Pancreas (tissue), 10 donors: ENCODE measurements at regions of chr16 and their contacts with region 1.

Region 1: GRCh38 chr16:48852951-48853350 is 243.0 kb upstream of the N4BP1 start:
- DNase-seq: peak in 3 of 6 donors; percentile 10 to 27 (median 18)
- ATAC-seq: peak; percentile 34 to 82 (median 65)
- H3K4me3 ChIP-seq: no peak overlapping the region
- H3K27ac ChIP-seq: no peak overlapping the region
- H3K4me1 ChIP-seq: no peaks in the 10 kb centered on the region
- H3K27me3 ChIP-seq: no peaks in the 10 kb centered on the region
- CTCF ChIP-seq: no peak

Region 2: GRCh38 chr16:48810803-48811453 is 42.0 kb before region 1 on chr16:
- intact Hi-C with region 1: loop called in 1 of 3 experiments (anchors 10 kb)
- DNase-seq: peak in 1 of 6 donors; percentile 35
- ATAC-seq: no peak
- H3K4me3 ChIP-seq: peak overlapping the region in 2 of 4 donors; percentile 1 to 29
- H3K27ac ChIP-seq: no peak overlapping the region
- H3K4me1 ChIP-seq: no peaks in the 10 kb centered on the region
- H3K27me3 ChIP-seq: peaks cover 0 to 3% (median 0%) of the 10 kb centered on the region in 4 donors
- CTCF ChIP-seq: no peak